Prostate gland (tissue), 2 donors: ENCODE measurements at regions of chrX and their contacts with region 1.

Region 1: GRCh38 chrX:108224727-108225621 is 133.4 kb downstream of the ATG4A start:
- DNase-seq: peak; percentile 22
- H3K4me3 ChIP-seq: no peak overlapping the region
- H3K27ac ChIP-seq: peak overlapping the region; percentile 22 to 31
- H3K4me1 ChIP-seq: no peaks in the 10 kb centered on the region
- H3K27me3 ChIP-seq: no peaks in the 10 kb centered on the region
- CTCF ChIP-seq: peak in 3 of 4 experiments; percentile 44 to 61 (median 54)
- POLR2A ChIP-seq: no peak

Region 2: DNA sequence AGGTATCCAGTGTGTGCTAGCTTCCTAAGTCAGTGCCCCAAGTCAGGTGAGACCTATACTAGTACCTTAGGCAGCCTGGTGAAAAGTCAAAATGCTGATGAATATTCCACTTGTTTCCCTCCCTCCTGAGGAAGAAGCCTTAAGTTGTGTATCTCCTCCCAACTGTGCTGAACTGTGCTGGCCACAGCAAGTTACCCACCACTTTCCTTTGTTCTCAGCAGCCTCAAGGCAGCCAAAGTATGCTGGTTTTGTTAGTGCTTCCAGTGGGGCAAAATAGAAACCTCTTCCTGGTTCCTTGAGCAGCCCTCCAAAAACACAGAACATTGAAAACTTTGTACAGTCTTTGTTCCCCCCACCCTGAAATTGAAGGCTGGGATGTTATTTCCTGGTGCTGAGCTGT is 119.5 kb before region 1 on chrX:
- intact Hi-C with region 1: no loop called
- DNase-seq: no peak
- H3K4me3 ChIP-seq: no peak overlapping the region
- H3K27ac ChIP-seq: no peak overlapping the region
- H3K4me1 ChIP-seq: no peaks in the 10 kb centered on the region
- H3K27me3 ChIP-seq: no peaks in the 10 kb centered on the region
- CTCF ChIP-seq: no peak
- POLR2A ChIP-seq: no peak

Region 3: DNA sequence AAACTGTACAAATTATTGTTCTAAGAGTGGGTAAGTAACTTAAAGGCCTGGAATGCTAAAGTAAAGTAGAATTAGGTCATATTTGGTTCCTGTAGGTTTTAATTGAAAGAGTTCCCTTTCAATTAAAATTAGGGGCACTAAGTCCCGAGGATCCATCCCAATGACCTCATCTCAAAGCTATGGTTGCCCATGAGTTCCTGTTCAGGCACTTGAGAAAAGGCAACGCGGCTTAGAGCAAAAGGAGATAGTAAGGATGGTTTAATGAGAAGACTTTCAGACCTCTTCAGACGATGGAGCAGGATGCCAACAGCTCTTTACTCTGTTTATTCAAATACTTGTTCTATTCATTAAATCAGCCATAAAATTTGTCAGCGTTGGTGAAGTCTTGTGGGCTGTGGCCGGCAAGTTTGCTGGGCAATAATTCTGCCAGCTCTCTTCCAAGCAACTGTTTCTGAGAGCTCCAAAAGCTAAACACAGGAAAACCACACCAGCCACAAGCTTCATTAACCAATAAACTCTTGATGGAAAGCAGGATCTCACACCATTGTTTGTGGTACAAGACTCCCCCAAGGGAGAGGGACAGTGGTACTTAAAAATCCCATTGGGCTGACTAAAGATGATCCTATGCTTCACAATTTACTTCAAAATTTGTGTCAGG is 45.9 kb after region 1 on chrX:
- intact Hi-C with region 1: loop called (anchors 10 kb)
- DNase-seq: peak; percentile 4
- H3K4me3 ChIP-seq: no peak overlapping the region
- H3K27ac ChIP-seq: peak overlapping the region; percentile 30 to 31
- H3K4me1 ChIP-seq: no peaks in the 10 kb centered on the region
- H3K27me3 ChIP-seq: no peaks in the 10 kb centered on the region
- CTCF ChIP-seq: no peak
- POLR2A ChIP-seq: no peak

Region 4: DNA sequence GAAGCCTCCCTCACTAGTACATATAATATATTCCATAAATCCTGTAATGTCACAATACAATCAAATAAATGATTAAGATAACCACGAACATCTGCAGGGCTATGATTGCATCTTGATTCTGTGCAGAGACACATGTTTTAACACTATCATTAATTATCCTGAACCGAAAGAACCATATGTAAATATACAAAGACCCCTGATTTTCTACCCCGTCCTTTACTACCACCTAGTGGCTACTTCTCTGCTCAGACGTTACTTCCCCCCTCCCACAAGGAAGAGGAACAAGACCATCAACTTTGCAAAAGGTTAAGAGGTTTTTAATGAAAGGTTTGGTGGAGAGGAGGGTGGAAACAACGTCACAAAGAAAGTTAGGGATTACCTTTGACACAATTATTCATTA is 79.2 kb after region 1 on chrX:
- intact Hi-C with region 1: loop called (anchors 10 kb)
- DNase-seq: no peak
- H3K4me3 ChIP-seq: no peak overlapping the region
- H3K27ac ChIP-seq: no peak overlapping the region
- H3K4me1 ChIP-seq: no peaks in the 10 kb centered on the region
- H3K27me3 ChIP-seq: no peaks in the 10 kb centered on the region
- CTCF ChIP-seq: peak in 2 of 4 experiments; percentile 20 to 24
- POLR2A ChIP-seq: no peak

Region 5: DNA sequence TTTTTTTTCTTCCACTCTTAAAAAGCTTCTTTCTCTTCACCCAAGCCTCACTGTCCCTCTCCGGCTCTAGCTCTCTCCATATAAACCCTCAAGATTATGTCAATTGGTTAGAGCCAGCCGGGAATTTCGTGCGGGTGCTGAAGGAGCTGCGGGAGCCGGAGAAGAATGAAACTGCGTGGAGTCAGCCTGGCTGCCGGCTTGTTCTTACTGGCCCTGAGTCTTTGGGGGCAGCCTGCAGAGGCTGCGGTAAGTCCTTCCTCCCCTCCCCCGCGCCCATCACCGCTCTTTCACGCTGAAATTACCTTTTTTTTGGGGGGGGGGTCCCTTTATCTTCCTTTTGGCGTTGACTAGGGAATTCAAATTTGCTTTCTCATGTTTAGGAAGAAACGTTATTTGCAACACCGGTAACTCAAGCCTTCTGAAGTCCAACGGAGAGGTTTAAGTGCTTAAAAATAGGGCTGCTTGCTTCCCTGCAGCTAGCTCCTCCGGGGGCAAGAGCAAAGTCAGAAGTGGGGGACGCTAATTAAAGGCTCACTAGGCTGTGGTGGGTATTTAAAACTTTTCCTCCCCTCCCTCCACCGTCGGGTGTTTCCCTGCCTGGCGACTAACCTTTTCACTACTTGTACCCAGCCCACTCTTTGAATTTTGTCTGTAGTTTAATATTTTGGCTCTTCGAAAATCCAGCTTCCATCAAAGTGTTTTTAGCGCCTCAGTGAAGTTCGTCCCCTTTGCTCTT is 215.2 kb after region 1 on chrX:
- intact Hi-C with region 1: loop called (anchors 5 kb)
- DNase-seq: no peak
- H3K4me3 ChIP-seq: peak overlapping the region; percentile 39 to 40
- H3K27ac ChIP-seq: peak overlapping the region; percentile 70 to 71
- H3K4me1 ChIP-seq: no peaks in the 10 kb centered on the region
- H3K27me3 ChIP-seq: no peaks in the 10 kb centered on the region
- CTCF ChIP-seq: no peak
- POLR2A ChIP-seq: no peak

Region 6: GRCh38 chrX:108537005-108537404 is 312.0 kb after region 1 on chrX:
- intact Hi-C with region 1: loop called (anchors 10 kb)
- DNase-seq: peak; percentile 7
- H3K4me3 ChIP-seq: no peak overlapping the region
- H3K27ac ChIP-seq: no peak overlapping the region
- H3K4me1 ChIP-seq: no peaks in the 10 kb centered on the region
- H3K27me3 ChIP-seq: no peaks in the 10 kb centered on the region
- CTCF ChIP-seq: peak; percentile 22 to 72 (median 55)
- POLR2A ChIP-seq: no peak